Gastrocnemius medialis (tissue), 4 donors: ENCODE measurements at regions of chr16 and their contacts with region 1.

Region 1: GRCh38 chr16:68328151-68328859 is 17.5 kb downstream of the PRMT7 start:
- DNase-seq: peak; percentile 69 to 87
- ATAC-seq: peak; percentile 90
- H3K4me3 ChIP-seq: no peak overlapping the region
- H3K27ac ChIP-seq: peak overlapping the region in 2 of 4 donors; percentile 44 to 56
- H3K4me1 ChIP-seq: peaks cover 0 to 25% of the 10 kb centered on the region in 2 donors
- H3K27me3 ChIP-seq: no peaks in the 10 kb centered on the region
- CTCF ChIP-seq: peak; percentile 92 to 98 (median 95)
- POLR2A ChIP-seq: no peak

Region 2: DNA sequence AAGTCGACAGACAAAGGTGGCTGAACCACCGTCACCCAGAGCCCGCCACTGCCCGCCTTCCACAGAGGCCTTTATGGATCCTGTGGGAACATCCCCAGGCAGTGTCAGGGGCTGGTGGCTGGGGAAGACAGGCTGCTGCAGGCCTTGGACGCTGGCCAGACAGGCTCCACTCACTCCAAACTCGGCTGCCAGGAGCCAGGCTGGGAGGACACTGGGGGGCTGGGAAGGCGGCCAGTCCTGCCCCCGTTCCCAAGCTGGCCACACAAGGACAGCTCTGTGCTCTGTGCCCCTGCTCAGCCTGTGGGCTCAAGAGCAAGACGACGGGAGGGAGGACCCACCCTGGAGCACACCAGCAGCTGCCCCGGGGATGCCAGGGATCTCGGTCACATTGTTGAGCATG is 376.8 kb before region 1 on chr16:
- in situ Hi-C with region 1: no loop called
- intact Hi-C with region 1: no loop called
- DNase-seq: no peak
- ATAC-seq: no peak
- H3K4me3 ChIP-seq: no peak overlapping the region
- H3K27ac ChIP-seq: peak overlapping the region in 2 of 4 donors; percentile 15 to 55
- H3K4me1 ChIP-seq: peaks cover 7 to 11% of the 10 kb centered on the region in 2 donors
- H3K27me3 ChIP-seq: no peaks in the 10 kb centered on the region
- CTCF ChIP-seq: no peak
- POLR2A ChIP-seq: no peak

Region 3: GRCh38 chr16:68085259-68086071 is 242.8 kb before region 1 on chr16 and contains the start of gene NFATC3:
- in situ Hi-C with region 1: loop called in 2 of 4 experiments (anchors 25 kb)
- intact Hi-C with region 1: no loop called
- DNase-seq: peak; percentile 98 to 99
- ATAC-seq: peak; percentile 72 to 76
- H3K4me3 ChIP-seq: peak within 1 kb of the TSS; percentile 73 to 96 (median 84)
- H3K27ac ChIP-seq: peak within 1 kb of the TSS; percentile 92 to 99 (median 97)
- H3K4me1 ChIP-seq: peaks cover 66 to 69% of the 10 kb centered on the region in 2 donors
- H3K27me3 ChIP-seq: no peaks in the 10 kb centered on the region
- CTCF ChIP-seq: peak in 1 of 5 experiments; percentile 9
- POLR2A ChIP-seq: peak; percentile 84 to 88
- total RNA-seq, gene NFATC3: 47.9 to 72.7 (median 70.7) TPM

Region 4: DNA sequence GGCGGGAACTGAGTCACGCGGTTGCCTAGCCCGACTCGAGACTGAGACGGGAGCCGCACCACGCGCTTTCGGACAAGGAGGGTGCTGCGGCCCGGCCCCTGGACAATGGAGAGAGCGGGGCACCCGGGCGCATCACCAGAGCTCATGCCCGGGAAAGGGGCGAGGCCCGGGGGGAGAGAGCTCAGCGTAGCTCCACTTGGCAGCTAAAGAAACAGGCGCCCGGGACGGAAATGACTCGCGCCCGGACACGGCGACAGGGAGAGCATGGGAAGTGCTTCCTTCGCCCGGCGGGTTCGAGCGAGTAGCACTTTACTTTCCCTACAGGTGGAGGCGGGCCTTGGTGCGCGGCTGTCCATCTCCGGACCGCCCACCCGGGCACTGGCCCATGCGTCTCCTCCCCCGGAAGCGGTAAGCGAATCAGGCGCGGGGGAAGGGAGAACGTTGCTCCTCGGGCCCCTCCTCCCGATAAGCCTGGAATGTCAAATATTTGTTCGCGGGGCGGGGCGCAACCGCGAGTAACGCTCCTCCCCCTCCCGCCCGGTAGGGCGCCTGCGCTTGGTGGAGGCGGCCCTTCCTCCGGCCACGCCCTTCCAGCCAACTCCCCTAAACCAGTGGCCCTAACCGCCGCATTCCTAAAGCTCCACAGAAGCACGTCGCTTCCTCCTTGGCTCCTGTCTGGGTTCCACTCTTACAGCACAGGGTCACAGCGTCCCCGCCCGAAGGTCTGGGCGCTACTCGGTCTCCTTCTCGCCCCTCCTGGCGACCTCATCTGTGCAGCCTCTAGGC is 90.9 kb before region 1 on chr16:
- in situ Hi-C with region 1: loop called in 1 of 4 experiments (anchors 5 kb)
- intact Hi-C with region 1: loop called (anchors 1 kb)
- DNase-seq: peak; percentile 95 to 96
- ATAC-seq: peak; percentile 78 to 82
- H3K4me3 ChIP-seq: peak overlapping the region; percentile 64 to 71 (median 68)
- H3K27ac ChIP-seq: peak overlapping the region; percentile 79 to 94 (median 88)
- H3K4me1 ChIP-seq: peaks cover 16 to 26% of the 10 kb centered on the region in 2 donors
- H3K27me3 ChIP-seq: no peaks in the 10 kb centered on the region
- CTCF ChIP-seq: peak in 1 of 5 experiments; percentile 9
- POLR2A ChIP-seq: peak; percentile 59 to 76

Region 5: GRCh38 chr16:68244903-68245853 is 83.1 kb before region 1 on chr16 and contains the start of gene PLA2G15:
- in situ Hi-C with region 1: loop called in 1 of 4 experiments (anchors 5 kb)
- intact Hi-C with region 1: no loop called
- DNase-seq: peak; percentile 96 to 97
- ATAC-seq: peak; percentile 58 to 63
- H3K4me3 ChIP-seq: peak within 1 kb of the TSS; percentile 68 to 97 (median 92)
- H3K27ac ChIP-seq: peak within 1 kb of the TSS; percentile 95 to 100 (median 99)
- H3K4me1 ChIP-seq: peaks cover 42 to 52% of the 10 kb centered on the region in 2 donors
- H3K27me3 ChIP-seq: no peaks in the 10 kb centered on the region
- CTCF ChIP-seq: no peak
- POLR2A ChIP-seq: peak; percentile 98 to 99
- total RNA-seq, gene PLA2G15: 67.8 to 91.3 (median 84.8) TPM

Region 6: GRCh38 chr16:68257906-68258800 is 70.2 kb before region 1 on chr16:
- in situ Hi-C with region 1: loop called (anchors 5 kb)
- intact Hi-C with region 1: loop called (anchors 1 kb)
- DNase-seq: peak; percentile 88 to 93
- ATAC-seq: peak; percentile 67
- H3K4me3 ChIP-seq: no peak overlapping the region
- H3K27ac ChIP-seq: peak overlapping the region; percentile 95 to 100 (median 99)
- H3K4me1 ChIP-seq: peaks cover 57 to 70% of the 10 kb centered on the region in 2 donors
- H3K27me3 ChIP-seq: no peaks in the 10 kb centered on the region
- CTCF ChIP-seq: no peak
- POLR2A ChIP-seq: peak in 1 of 2 donors; percentile 25

Region 7: GRCh38 chr16:68264128-68265077 is 63.9 kb before region 1 on chr16 and contains the start of gene SLC7A6:
- in situ Hi-C with region 1: loop called (anchors 5 kb)
- intact Hi-C with region 1: loop called (anchors 1 kb)
- DNase-seq: peak; percentile 53 to 76
- ATAC-seq: peak; percentile 49 to 55
- H3K4me3 ChIP-seq: peak within 1 kb of the TSS; percentile 84 to 96 (median 94)
- H3K27ac ChIP-seq: peak within 1 kb of the TSS; percentile 95 to 100 (median 99)
- H3K4me1 ChIP-seq: peaks cover 43 to 69% of the 10 kb centered on the region in 2 donors
- H3K27me3 ChIP-seq: no peaks in the 10 kb centered on the region
- CTCF ChIP-seq: peak; percentile 72 to 89 (median 83)
- POLR2A ChIP-seq: peak; percentile 97 to 99
- total RNA-seq, gene SLC7A6: 97.3 to 205 (median 117) TPM

Region 8: DNA sequence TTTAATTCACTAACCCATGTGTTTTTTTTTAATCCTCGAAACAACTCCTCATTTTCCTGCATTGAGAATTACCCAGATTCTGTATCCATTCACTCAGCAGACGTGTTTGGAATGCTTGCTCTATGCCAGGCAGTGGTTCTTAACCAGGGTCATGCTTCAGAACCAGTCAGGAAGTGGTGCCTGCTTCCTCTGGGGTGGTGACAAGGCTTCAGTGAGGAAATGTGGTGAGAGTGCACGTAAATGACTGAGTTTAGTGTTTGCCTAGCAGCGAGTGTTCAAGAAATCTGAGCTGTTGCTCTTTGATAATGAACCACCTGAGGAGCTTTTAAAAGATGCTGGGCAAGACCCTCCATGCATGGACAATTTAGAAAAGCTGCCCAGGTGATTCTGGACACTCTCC is 220.6 kb after region 1 on chr16:
- in situ Hi-C with region 1: no loop called
- intact Hi-C with region 1: no loop called
- DNase-seq: no peak
- ATAC-seq: no peak
- H3K4me3 ChIP-seq: no peak overlapping the region
- H3K27ac ChIP-seq: no peak overlapping the region
- H3K4me1 ChIP-seq: no peaks in the 10 kb centered on the region
- H3K27me3 ChIP-seq: no peaks in the 10 kb centered on the region
- CTCF ChIP-seq: no peak
- POLR2A ChIP-seq: no peak